Activated CD8-positive, alpha-beta T cell treated with anti-CD3 and anti-CD28 coated beads for 36 hours (primary cell): ENCODE measurements at regions of chr9 and their contacts with region 1.

Region 1: DNA sequence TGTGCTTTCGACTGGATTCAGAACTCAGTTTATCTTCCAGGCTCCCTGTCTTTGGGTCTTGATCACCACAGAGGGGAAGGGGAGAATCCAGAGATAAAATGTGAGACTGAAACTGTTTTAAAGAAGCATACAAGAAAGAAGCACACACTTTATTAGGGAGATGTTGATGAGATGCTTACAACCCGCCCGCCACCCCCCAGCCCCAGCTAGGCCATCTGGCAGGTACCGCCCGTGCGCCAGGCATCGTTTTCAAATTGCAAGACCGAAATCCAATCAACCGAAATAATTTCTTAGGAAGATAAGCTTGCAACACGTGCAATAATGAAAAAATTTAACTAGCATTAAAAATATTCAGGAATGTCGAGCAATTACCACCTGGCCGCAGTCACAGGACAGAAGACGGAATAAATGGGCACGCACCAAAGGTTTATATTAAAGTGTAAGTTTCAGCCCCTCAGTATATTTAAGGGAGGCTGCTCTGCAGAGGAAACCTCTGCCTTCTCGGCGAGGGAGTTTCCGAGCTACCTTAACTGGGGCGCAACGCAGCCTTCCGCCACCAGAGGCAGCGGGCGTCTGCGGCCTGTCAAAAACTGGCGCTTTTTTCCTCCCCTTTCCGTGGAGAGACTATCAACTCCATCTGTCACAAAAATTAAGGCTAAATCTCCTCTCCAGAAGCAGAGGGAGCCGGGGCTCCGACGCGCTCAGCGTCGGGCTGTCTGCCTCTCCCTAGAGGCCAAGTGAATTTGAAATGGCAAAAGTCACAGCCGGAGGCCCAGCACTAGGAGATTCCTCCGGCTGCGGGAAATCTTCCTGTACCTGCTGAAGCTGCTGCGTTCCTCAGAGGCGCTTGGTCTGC is 996 bp upstream of the GAS1 start:
- DNase-seq: peak; percentile 79
- ATAC-seq: peak; percentile 74
- H3K4me3 Mint-ChIP-seq: peak overlapping the region; percentile 75
- H3K27ac Mint-ChIP-seq: peak overlapping the region; percentile 61
- H3K4me1 Mint-ChIP-seq: peaks cover 13% of the 10 kb centered on the region
- H3K27me3 Mint-ChIP-seq: peaks cover 29% of the 10 kb centered on the region
- CTCF ChIP-seq: peak; percentile 85

Region 2: GRCh38 chr9:86885232-86885631 is 63.1 kb before region 1 on chr9:
- CTCF ChIA-PET with region 1: interaction called, 4 read pairs
- POLR2A ChIA-PET with region 1: no interaction called
- intact Hi-C with region 1: loop called (anchors 10 kb)
- DNase-seq: no peak
- ATAC-seq: no peak
- H3K4me3 Mint-ChIP-seq: no peak overlapping the region
- H3K27ac Mint-ChIP-seq: no peak overlapping the region
- H3K4me1 Mint-ChIP-seq: no peaks in the 10 kb centered on the region
- H3K27me3 Mint-ChIP-seq: no peaks in the 10 kb centered on the region
- CTCF ChIP-seq: no peak